ENCODE measurements at regions of chr6 and their contacts with region 1.

Region 1: DNA sequence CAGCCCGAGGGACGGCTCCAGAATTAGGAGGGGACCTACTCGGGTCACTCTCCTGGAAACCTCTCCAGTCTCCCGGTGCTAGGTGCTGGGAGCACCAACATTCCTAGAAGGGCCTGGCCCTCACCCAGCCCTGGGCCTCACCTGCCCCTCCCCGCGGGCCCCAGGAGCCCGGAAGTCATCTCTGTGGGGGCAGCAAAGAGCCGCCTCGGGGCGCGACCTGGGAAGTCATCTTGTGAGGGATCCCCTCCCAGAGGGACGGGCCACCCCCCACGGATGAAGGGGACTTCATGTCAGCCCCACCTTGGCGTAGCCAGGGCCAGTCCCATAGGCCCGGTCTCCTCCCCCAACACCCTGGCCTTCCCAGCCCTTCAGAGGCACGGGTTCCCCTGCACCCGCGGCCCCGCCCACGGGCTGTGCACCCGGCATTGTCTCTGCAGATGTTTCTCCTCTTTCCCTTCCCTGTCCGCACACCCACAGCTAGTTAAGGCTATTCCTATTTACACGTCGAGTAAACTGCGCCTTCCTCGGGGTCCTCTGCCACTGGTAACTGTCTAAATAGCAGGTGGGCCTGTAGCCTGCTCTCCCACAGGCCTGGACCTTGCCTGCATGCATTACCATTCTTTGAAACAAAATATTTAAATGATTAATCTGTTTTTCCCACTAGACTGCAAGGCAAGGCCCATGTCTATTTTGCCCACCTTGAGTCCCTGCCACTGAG is 896 bp upstream of the RNASET2 start:
- DNase-seq: no peak
- ATAC-seq: peak; percentile 43
- H3K4me3 ChIP-seq: peak overlapping the region; percentile 65 to 70
- H3K27ac ChIP-seq: peak overlapping the region; percentile 55
- H3K4me1 ChIP-seq: peaks cover 7% of the 10 kb centered on the region
- H3K27me3 ChIP-seq: no peaks in the 10 kb centered on the region
- CTCF ChIP-seq: no peak

Region 2: GRCh38 chr6:167020206-167020605 is 63.0 kb after region 1 on chr6:
- CTCF ChIA-PET with region 1: interaction called, 12 read pairs
- POLR2A ChIA-PET with region 1: no interaction called
- in situ Hi-C with region 1: no loop called
- intact Hi-C with region 1: no loop called
- DNase-seq: no peak
- ATAC-seq: no peak
- H3K4me3 ChIP-seq: no peak overlapping the region
- H3K27ac ChIP-seq: no peak overlapping the region
- H3K4me1 ChIP-seq: no peaks in the 10 kb centered on the region
- H3K27me3 ChIP-seq: no peaks in the 10 kb centered on the region
- CTCF ChIP-seq: no peak

Measured in Panc1 (cell line).